Calu3 (cell line): ENCODE measurements at regions of chr5 and their contacts with region 1.

Region 1: GRCh38 chr5:135208903-135209721 is 175.1 kb upstream of the PITX1 start:
- DNase-seq: peak; percentile 68
- H3K4me3 Mint-ChIP-seq: no peak overlapping the region
- H3K27ac Mint-ChIP-seq: no peak overlapping the region
- H3K4me1 Mint-ChIP-seq: peaks cover 16% of the 10 kb centered on the region
- H3K27me3 Mint-ChIP-seq: peaks cover 28% of the 10 kb centered on the region
- CTCF ChIP-seq: no peak

Region 2: DNA sequence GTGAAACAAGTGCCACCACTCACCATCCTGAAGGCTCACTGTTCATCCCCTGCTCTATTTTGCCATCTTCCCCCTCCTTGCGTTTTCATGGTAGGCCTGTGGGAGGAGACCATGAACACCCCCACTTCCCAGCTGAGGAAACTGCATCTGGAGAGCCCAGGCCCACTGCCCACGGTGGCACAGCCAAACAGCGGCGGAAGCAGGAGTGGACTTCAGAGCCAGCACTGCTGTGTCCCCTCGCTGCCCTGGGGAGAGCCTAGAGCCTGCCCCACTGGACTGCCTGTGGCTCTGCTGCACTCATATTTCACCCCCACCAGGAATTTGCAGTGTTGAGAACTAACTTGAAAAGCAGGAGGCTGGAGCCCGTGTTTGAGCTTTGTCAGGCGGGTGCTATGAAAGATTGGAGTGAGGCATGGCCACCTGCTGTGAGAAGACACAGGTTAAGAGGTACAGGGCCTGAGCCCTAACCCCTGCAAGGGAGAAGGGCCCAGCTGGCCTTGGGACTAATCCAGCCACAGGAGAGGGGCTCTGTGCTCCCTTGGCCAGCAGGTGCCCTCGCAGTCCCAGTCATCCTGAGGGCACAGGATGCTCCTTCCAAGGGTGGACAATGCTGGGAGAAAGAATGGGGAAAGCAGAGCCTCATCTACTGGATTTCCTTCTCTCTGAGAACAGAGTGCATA is 111.0 kb after region 1 on chr5:
- CTCF ChIA-PET with region 1: no interaction called
- intact Hi-C with region 1: no loop called
- DNase-seq: no peak
- H3K4me3 Mint-ChIP-seq: no peak overlapping the region
- H3K27ac Mint-ChIP-seq: no peak overlapping the region
- H3K4me1 Mint-ChIP-seq: no peaks in the 10 kb centered on the region
- H3K27me3 Mint-ChIP-seq: peaks cover 59% of the 10 kb centered on the region
- CTCF ChIP-seq: no peak

Region 3: GRCh38 chr5:135332519-135333150 is 123.5 kb after region 1 on chr5:
- CTCF ChIA-PET with region 1: no interaction called
- intact Hi-C with region 1: loop called (anchors 2 kb)
- DNase-seq: no peak
- H3K4me3 Mint-ChIP-seq: no peak overlapping the region
- H3K27ac Mint-ChIP-seq: no peak overlapping the region
- H3K4me1 Mint-ChIP-seq: no peaks in the 10 kb centered on the region
- H3K27me3 Mint-ChIP-seq: no peaks in the 10 kb centered on the region
- CTCF ChIP-seq: peak; percentile 36